Cardiac septum (tissue), 1 donor: ENCODE measurements at regions of chr4 and their contacts with region 1.

Region 1: GRCh38 chr4:68175562-68176155 is 46.0 kb upstream of the TMPRSS11F start:
- DNase-seq: no peak

Region 2: DNA sequence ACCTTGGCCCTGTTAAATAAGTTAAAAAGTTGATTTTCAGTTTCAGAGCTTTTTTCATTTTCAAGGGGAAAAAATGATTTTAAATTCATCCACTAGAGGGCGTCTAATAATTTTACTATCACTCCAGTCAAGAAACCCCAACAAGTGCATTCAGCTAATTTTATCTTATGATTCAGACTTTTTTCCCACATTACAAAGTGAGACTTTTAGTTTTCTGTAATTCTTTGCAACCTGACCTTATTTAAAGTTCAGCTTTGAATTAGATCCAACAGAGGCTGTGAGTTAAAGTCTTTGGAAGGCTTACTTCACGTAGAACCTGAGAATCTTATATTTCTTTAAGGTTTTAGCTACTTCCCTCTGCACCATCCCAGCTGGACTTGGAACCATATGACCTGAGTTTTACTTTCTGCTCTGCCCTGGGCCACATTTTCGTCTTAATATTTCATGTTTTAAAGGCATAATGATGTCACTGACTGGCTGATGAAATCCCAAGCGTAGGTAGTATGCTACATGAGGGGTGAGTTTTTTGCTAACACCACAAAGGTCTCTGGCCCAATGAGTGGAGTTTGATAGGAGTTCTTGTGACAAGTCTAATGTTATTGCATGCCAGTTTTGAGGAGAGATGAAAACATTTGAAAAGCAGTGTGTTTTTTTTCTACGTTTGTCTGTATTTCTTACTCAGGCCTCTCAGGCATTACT is 428.7 kb before region 1 on chr4:
- intact Hi-C with region 1: loop called (anchors 5 kb)
- DNase-seq: no peak

Region 3: DNA sequence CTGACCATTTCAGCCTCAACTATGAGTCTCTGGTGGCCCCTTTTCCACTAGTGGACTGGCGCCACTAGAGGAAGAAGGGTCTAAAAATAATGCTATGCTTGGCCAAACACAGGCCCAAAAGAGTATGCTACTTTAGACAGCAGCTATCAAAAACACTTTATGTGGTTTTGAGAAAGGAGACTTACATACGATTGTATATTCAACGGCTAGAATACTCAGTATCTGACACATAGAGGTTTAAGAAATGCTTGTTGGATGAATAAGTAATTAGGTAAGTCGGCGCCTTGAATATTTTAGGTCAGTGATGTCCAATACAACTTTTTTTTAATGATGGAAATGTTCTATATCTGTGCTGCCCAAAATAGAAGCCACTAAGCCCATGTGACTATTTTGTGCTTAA is 186.7 kb before region 1 on chr4:
- intact Hi-C with region 1: loop called (anchors 5 kb)
- DNase-seq: no peak